Naive thymus-derived CD4-positive, alpha-beta T cell (primary cell): ENCODE measurements at regions of chr11 and their contacts with region 1.

Region 1: GRCh38 chr11:61129639-61130523 is 27.6 kb downstream of the CD5 start:
- DNase-seq: peak; percentile 82 to 94 (median 88)
- ATAC-seq: peak; percentile 96
- H3K4me3 ChIP-seq: no peak overlapping the region
- H3K4me3 Mint-ChIP-seq: peak overlapping the region; percentile 15 to 77 (median 54)
- H3K27ac ChIP-seq: peak overlapping the region; percentile 57
- H3K27ac Mint-ChIP-seq: peak overlapping the region; percentile 4 to 87 (median 72)
- H3K4me1 ChIP-seq: peaks cover 4 to 18% of the 10 kb centered on the region in 2 donors
- H3K4me1 Mint-ChIP-seq: peaks cover 10 to 29% (median 23%) of the 10 kb centered on the region in 7 donors
- H3K27me3 ChIP-seq: no peaks in the 10 kb centered on the region
- H3K27me3 Mint-ChIP-seq: no peaks in the 10 kb centered on the region

Region 2: DNA sequence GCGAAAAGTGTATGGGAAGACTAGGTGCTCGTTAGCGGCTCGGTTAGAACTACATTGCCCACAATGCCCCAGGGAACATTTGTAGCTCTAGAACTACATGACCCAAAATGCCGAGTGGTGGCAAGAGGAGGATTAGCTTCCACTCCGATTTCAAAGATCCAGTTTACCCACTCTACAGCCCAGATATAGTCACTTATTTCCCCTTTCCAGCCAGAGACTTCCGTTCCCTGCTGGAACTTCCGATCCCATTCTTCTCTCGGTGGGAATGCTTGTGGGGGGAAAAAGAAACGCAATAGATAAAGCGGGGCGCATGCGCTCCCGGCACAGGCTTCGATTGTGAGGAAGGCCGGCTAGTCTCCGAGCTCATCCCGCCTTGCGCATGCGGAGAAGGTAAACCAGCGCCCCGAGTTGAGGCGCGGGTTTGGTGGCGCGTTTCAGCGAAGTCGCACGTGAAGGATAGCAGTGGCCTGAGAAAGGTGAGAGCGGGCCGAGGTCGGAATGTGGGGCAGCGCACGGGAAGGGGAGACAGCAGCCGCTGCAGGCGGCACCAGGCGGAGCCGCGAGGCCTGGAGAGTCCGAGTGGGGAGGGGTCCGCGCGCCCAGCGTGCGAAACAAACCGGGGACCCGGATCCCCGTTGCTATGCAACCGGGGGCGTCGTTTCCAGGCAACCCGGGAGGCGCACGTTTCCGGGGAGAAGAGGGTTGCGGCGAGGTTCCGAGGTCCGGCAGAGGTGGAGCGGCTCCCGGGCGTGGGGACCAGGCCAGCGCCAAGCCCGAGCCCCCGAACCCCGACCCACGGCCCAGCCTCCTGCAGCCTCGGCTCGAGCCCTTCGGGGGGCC is 215.9 kb before region 1 on chr11 and contains the start of gene TMEM109:
- CTCF ChIA-PET with region 1: interaction called, 6 read pairs
- POLR2A ChIA-PET with region 1: no interaction called
- intact Hi-C with region 1: loop called (anchors 1 kb)
- DNase-seq: peak; percentile 77 to 93 (median 91)
- ATAC-seq: peak; percentile 76
- H3K4me3 ChIP-seq: peak within 1 kb of the TSS; percentile 94
- H3K4me3 Mint-ChIP-seq: peak within 1 kb of the TSS; percentile 91 to 99 (median 98)
- H3K27ac ChIP-seq: peak within 1 kb of the TSS; percentile 94
- H3K27ac Mint-ChIP-seq: peak within 1 kb of the TSS; percentile 91 to 99 (median 97)
- H3K4me1 ChIP-seq: peaks cover 43 to 45% of the 10 kb centered on the region in 2 donors
- H3K4me1 Mint-ChIP-seq: peaks cover 39 to 77% (median 60%) of the 10 kb centered on the region in 7 donors
- H3K27me3 ChIP-seq: no peaks in the 10 kb centered on the region
- H3K27me3 Mint-ChIP-seq: peaks cover 0 to 11% (median 0%) of the 10 kb centered on the region in 5 donors
- total RNA-seq, gene TMEM109: 49.8 to 99.8 (median 56.9) TPM

Region 3: GRCh38 chr11:61061081-61061826 is 68.6 kb before region 1 on chr11:
- CTCF ChIA-PET with region 1: interaction called, 5 read pairs
- POLR2A ChIA-PET with region 1: interaction called, 9 read pairs
- intact Hi-C with region 1: loop called in 1 of 2 experiments (anchors 1 kb)
- DNase-seq: peak in 7 of 9 donors; percentile 47 to 89 (median 56)
- ATAC-seq: peak; percentile 86
- H3K4me3 ChIP-seq: peak overlapping the region; percentile 34
- H3K4me3 Mint-ChIP-seq: peak overlapping the region; percentile 75 to 94 (median 83)
- H3K27ac ChIP-seq: peak overlapping the region; percentile 72
- H3K27ac Mint-ChIP-seq: peak overlapping the region; percentile 88 to 99 (median 96)
- H3K4me1 ChIP-seq: peaks cover 24 to 48% of the 10 kb centered on the region in 2 donors
- H3K4me1 Mint-ChIP-seq: peaks cover 47 to 83% (median 80%) of the 10 kb centered on the region in 7 donors
- H3K27me3 ChIP-seq: no peaks in the 10 kb centered on the region
- H3K27me3 Mint-ChIP-seq: no peaks in the 10 kb centered on the region

Region 4: DNA sequence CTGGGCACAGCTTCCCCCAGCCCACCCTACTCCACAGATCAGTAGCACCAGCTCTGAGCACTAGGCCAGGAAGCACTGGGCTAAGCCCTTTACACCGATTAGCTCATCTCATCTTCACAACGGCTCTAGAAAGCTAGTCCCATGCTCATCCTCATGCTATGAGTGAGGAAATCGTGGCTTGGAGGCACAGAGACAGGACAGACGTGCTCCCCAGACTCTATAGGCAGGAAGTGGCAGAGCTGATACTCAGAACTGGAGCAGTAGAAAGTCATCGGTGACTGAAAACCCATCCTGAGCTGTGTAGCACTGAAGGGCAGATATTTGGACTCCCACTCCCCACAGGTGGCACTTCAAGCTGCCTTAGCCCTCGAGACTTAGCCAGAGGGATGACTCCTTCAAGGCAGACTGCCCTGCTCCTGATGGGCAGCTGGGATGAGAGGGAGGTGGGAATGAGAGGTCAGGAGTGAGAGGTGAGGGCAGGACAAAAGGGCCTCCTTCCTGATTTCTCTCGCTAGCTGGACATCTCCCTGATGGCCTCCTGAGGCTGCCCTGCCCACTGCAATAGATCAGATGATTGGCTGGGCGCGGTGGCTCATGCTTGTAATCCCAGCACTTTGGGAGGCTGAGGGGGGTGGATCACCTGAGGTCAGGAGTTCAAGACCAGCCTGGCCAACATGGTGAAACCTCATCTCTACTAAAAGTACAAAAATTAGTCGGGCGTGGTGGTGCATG is 17.9 kb before region 1 on chr11:
- CTCF ChIA-PET with region 1: interaction called, 10 read pairs
- POLR2A ChIA-PET with region 1: interaction called, 82 read pairs
- intact Hi-C with region 1: loop called (anchors 1 to 2 kb)
- DNase-seq: peak in 8 of 9 donors; percentile 57 to 78 (median 74)
- ATAC-seq: peak; percentile 81
- H3K4me3 ChIP-seq: peak overlapping the region; percentile 31
- H3K4me3 Mint-ChIP-seq: peak overlapping the region in 9 of 10 donors; percentile 82 to 93 (median 86)
- H3K27ac ChIP-seq: peak overlapping the region; percentile 78
- H3K27ac Mint-ChIP-seq: peak overlapping the region in 7 of 9 donors; percentile 81 to 98 (median 92)
- H3K4me1 ChIP-seq: peaks cover 58 to 93% of the 10 kb centered on the region in 2 donors
- H3K4me1 Mint-ChIP-seq: peaks cover 81 to 100% (median 97%) of the 10 kb centered on the region in 7 donors
- H3K27me3 ChIP-seq: no peaks in the 10 kb centered on the region
- H3K27me3 Mint-ChIP-seq: no peaks in the 10 kb centered on the region

Region 5: GRCh38 chr11:61187505-61188130 is 57.7 kb after region 1 on chr11:
- CTCF ChIA-PET with region 1: interaction called, 12 read pairs
- POLR2A ChIA-PET with region 1: interaction called, 5 read pairs
- intact Hi-C with region 1: loop called (anchors 1 kb)
- DNase-seq: peak; percentile 48 to 76 (median 72)
- ATAC-seq: peak; percentile 96
- H3K4me3 ChIP-seq: no peak overlapping the region
- H3K4me3 Mint-ChIP-seq: no peak overlapping the region
- H3K27ac ChIP-seq: no peak overlapping the region
- H3K27ac Mint-ChIP-seq: peak overlapping the region in 1 of 9 donors; percentile 25
- H3K4me1 ChIP-seq: no peaks in the 10 kb centered on the region
- H3K4me1 Mint-ChIP-seq: peaks cover 0 to 5% (median 0%) of the 10 kb centered on the region in 7 donors
- H3K27me3 ChIP-seq: no peaks in the 10 kb centered on the region
- H3K27me3 Mint-ChIP-seq: peaks cover 0 to 13% (median 4%) of the 10 kb centered on the region in 5 donors